ENCODE measurements at regions of chr3 and their contacts with region 1.

Region 1: DNA sequence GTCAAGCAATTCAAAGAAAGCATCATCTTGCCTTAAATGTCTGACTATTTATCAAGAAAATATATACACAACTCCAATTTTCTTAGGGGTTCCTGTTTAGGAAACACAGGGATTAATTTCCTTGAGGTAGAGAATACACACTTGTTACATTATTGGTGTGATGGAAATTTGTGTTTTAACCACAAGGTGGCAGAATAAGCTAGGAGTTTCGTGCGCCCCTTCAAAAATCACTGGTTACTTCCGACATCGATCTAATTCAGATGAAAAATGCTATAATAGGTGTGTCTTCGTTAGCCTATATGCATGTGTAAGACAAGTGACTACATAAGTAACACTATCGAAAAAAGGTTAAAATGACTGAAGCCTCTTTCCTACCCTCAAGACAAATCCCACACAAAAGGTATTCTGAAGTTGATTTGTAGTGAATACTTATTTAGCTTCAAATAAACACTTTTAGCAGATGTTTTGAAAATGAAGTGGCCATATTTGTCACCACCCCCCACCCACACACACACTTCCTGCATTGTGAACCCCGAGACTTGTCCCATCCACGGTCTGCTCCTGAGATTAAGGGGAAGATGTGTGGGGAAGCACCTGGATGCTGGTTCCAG is 246.5 kb downstream of the ROBO1 start:
- DNase-seq: no peak
- ATAC-seq: no peak

Region 2: DNA sequence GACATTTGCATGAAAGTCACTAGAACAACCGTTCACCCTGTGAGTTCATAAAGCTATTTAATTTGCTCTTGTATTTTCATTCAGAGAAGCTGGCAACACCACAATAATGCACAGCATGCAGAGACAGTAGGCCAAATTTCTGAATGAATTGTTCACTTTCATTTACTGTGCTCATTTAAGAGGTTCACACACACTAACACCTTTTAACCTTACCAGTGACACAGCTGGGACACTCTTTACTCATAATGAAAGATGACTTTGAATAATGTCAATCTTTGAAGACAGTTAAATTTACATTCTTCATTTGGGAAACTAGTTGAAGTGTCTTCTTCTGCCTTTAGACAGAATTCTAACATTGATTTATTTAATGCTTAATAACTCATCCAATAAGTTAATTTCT is 150.7 kb after region 1 on chr3:
- intact Hi-C with region 1: no loop called
- DNase-seq: no peak
- ATAC-seq: no peak

Region 3: GRCh38 chr3:80688814-80689213 is 1167.5 kb after region 1 on chr3:
- intact Hi-C with region 1: loop called (anchors 5 kb)
- DNase-seq: no peak
- ATAC-seq: no peak

Measured in left ventricle myocardium superior (tissue), 1 donor.